ENCODE measurements at regions of chr6 and their contacts with region 1.

Region 1: DNA sequence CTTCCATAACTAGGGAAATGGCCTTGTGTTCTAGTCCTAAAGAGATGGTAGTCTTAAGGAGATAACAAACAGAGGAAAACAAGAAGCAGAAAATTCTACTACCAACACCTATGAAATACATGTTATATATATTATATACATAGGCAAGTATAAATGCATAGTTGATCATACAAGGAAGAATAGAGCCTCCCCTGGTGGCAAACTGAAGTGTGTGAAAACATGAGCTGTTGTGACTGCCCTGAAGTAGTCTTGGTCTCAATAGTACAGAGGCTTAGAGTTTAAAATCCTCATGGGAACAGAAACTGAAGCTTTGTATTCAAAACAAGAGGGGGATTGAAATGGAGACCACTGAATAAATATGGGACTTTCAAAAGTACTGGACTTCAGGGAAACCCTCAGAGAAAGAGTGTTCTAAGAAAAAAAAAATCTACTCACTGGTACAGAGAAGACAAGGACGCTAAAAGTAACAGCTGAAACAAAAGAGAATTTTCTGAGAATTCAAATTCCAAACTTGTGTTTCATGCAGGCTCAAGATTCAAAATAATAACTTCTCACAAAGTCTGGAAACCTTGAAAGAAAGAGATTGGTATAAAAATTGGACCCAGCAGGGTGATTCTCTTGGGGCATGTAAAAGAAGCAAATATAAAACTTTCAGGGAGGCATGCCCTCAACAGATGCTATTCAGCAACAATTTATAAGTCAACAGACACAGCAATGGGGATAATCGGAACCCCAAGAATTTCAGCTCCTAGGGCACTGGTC is 59.7 kb upstream of the SAMD3 start:
- DNase-seq: peak; percentile 12
- H3K4me3 ChIP-seq: no peak overlapping the region
- H3K27ac ChIP-seq: no peak overlapping the region
- H3K4me1 ChIP-seq: no peaks in the 10 kb centered on the region
- CTCF ChIP-seq: peak; percentile 65

Region 2: DNA sequence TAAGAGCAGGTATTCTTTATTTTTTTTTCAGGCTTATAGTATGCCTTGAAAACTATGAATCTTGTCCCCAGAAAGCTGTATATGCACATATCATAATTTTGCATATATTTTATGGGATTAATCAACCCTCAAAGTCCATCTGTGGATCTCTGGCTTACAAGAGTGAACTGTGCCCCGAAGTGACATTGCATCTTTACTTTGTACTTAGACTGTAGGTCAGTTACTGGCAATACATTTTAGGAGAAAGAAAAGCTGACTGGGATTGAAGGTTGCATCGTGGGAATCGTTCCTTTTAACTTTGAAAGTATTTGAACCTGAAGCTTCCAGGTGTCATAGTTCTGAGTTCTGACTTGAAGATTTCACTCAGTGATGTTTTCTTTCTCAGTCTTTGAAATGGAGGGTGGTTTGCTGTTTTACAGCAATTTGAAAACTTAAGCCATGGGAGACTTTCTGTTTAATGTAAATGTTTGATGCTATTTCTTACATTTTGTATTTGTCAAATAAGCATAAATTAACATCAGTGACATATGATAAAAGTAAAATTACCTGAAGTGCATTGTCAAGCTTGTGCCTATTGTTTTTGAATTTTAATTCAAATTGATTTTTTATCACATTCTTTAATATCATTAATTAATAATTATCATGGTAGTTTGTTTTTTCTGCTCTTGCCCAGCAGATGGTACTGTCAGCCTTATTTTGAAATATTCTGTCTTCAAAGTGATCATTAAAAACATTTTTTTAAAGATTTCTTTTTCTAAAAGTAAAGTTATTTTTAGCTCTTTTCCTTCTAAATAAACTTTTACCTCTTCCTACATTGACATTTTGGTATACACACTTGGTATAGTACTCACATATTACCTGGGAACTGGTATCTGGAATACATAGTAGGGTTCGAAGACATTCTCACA is 235.1 kb before region 1 on chr6:
- CTCF ChIA-PET with region 1: no interaction called
- POLR2A ChIA-PET with region 1: no interaction called
- intact Hi-C with region 1: loop called (anchors 10 kb)
- DNase-seq: no peak
- H3K4me3 ChIP-seq: no peak overlapping the region
- H3K27ac ChIP-seq: no peak overlapping the region
- H3K4me1 ChIP-seq: no peaks in the 10 kb centered on the region
- CTCF ChIP-seq: peak; percentile 62

Region 3: GRCh38 chr6:130076512-130076911 is 205.9 kb before region 1 on chr6:
- CTCF ChIA-PET with region 1: no interaction called
- POLR2A ChIA-PET with region 1: no interaction called
- intact Hi-C with region 1: loop called (anchors 1 kb)
- DNase-seq: peak; percentile 7
- H3K4me3 ChIP-seq: no peak overlapping the region
- H3K27ac ChIP-seq: no peak overlapping the region
- H3K4me1 ChIP-seq: no peaks in the 10 kb centered on the region
- CTCF ChIP-seq: peak; percentile 65

Measured in OCI-LY7 (cell line).